Aorta (tissue), 5 donors: ENCODE measurements at regions of chr20 and their contacts with region 1.

Region 1: DNA sequence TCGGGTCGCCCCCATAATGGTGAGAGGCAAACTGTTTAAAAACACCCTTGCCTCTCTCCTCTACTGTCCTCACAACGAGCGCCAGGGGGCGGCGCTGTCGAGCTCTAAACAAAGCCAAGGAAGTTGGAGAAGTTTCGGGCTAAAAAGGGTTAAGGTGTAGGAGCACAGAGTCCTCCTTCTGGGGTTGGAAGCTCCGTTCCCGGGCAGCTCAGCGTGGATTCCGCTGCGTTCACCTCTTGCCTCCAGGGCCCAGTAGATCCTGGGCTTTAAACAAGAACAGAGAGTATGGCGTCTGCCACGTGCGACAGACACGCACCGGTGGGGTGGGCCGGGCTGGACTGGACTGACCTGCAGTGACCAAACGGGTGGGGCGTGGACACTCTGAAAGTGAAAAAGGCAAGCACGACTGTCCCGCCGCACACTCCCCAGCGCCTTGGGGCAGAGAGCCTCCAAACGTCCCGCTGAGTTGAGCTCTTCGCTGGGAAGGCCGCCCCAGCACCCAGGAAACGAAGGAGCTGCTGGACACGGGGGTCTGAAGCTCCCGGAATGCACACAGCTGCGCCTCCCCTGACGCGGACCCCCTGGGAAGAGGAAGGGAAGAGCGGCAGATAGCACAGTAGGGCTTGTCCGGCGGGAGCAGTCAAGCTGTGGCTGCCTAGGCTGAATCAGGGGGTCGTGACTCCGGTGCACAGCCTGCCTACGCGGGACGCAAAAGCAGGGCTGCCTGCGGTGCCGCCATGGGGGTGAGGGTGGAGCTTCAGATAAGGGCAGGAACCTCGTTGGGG is 1.6 kb upstream of the THBD start:
- DNase-seq: peak; percentile 92 to 96
- ATAC-seq: peak; percentile 65
- H3K4me3 ChIP-seq: peak overlapping the region; percentile 19 to 41
- H3K27ac ChIP-seq: peak overlapping the region in 1 of 2 donors; percentile 53
- H3K4me1 ChIP-seq: no peaks in the 10 kb centered on the region
- H3K27me3 ChIP-seq: no peaks in the 10 kb centered on the region

Region 2: GRCh38 chr20:22333885-22334545 is 717.0 kb before region 1 on chr20:
- intact Hi-C with region 1: loop called in 1 of 2 experiments (anchors 10 kb)
- DNase-seq: peak; percentile 62 to 80
- ATAC-seq: peak; percentile 80
- H3K4me3 ChIP-seq: no peak overlapping the region
- H3K27ac ChIP-seq: no peak overlapping the region
- H3K4me1 ChIP-seq: no peaks in the 10 kb centered on the region
- H3K27me3 ChIP-seq: no peaks in the 10 kb centered on the region

Region 3: DNA sequence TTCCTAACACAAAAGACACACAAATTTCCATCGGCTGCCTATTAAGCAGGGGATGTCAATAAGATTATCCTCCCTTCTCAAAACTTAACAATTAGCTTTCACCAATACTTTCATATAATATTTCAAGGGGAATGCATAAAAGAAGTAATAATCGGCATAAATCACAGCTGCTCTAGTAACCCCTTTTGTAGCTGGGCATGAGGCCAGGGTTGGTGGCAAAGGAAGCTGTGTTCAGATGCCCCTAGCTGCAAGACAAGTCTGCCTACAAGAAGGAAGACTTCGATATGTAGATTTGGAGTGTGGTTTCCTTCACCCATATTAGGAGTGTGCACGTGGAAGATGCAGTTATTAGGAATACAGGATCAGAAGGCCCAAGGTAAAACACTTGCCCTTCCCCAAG is 172.9 kb before region 1 on chr20:
- intact Hi-C with region 1: no loop called
- DNase-seq: no peak
- ATAC-seq: no peak
- H3K4me3 ChIP-seq: no peak overlapping the region
- H3K27ac ChIP-seq: no peak overlapping the region
- H3K4me1 ChIP-seq: no peaks in the 10 kb centered on the region
- H3K27me3 ChIP-seq: no peaks in the 10 kb centered on the region

Region 4: DNA sequence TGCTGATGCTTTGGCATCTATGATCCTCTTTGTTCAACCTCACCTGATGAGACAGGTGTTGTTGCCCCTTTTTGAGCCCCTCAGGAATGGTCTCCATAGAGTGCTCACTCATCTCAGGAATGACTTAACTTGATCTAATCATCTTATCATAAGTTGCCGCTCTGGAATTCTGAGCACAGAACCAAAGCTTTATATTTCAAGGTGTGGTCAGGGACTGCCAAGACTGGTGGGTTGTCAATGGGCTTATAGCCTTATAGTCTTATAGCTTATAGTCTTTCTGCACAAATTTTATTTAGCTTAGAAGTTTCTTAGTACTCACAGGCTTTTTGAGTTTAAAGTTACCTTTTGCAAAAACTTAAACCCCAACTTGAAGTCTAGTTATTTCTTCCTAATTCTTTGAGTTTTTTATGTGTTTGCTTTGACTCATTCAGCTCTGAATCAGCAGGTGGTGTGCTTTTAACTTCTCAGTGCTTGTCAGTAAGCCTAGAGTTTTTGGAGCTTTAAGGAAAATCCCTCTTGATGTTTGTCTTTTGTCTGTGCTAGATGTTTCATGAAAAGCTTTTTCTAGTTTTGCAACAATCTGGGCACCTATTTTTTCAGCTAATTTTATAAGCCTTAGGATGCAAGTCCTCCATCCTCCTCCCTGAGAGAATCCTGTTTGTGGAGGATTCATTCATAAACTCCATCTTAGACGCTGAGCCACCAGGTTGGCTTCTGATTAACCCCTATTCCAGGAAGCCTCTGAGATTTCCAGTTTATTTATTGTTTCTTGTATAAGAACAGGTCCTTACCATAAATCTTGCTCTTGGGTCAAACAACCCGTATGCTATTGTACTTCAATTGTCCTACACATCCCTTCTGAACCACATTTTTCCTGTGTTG is 88.2 kb before region 1 on chr20:
- intact Hi-C with region 1: no loop called
- DNase-seq: no peak
- ATAC-seq: no peak
- H3K4me3 ChIP-seq: no peak overlapping the region
- H3K27ac ChIP-seq: no peak overlapping the region
- H3K4me1 ChIP-seq: no peaks in the 10 kb centered on the region
- H3K27me3 ChIP-seq: no peaks in the 10 kb centered on the region

Region 5: DNA sequence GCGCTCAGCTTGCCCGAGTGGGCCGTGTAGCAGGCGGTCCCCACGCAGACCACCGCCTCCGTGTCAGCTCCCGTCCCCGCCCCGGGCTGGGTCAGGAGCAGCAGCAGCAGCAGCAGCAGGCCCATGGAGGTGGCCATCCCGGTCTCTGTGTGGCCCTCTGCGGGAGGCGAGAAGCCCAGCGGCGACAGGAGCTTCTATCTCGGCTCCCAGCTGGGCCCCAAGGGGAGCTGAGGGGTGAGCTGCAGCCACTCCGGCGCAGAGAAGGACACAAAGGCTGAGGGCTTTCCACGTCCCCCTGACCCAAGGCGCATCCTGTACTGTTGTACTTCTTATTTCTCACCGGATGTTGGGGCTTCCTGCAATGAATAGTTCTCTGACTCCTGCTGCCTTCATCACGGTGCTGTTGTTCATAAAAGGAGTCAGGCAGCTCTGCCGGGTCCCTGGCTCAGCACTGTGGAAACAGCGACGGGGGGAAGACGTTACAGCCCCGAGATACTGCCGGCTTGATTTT is 35.1 kb after region 1 on chr20 and contains the start of gene CD93:
- intact Hi-C with region 1: loop called in 1 of 2 experiments (anchors 5 kb)
- DNase-seq: peak; percentile 72 to 89
- ATAC-seq: peak; percentile 79
- H3K4me3 ChIP-seq: no peak within 1 kb of the TSS
- H3K27ac ChIP-seq: peak within 1 kb of the TSS; percentile 71 to 89
- H3K4me1 ChIP-seq: peaks cover 0 to 2% of the 10 kb centered on the region in 2 donors
- H3K27me3 ChIP-seq: no peaks in the 10 kb centered on the region
- total RNA-seq, gene CD93: 123 to 160 TPM

Region 6: DNA sequence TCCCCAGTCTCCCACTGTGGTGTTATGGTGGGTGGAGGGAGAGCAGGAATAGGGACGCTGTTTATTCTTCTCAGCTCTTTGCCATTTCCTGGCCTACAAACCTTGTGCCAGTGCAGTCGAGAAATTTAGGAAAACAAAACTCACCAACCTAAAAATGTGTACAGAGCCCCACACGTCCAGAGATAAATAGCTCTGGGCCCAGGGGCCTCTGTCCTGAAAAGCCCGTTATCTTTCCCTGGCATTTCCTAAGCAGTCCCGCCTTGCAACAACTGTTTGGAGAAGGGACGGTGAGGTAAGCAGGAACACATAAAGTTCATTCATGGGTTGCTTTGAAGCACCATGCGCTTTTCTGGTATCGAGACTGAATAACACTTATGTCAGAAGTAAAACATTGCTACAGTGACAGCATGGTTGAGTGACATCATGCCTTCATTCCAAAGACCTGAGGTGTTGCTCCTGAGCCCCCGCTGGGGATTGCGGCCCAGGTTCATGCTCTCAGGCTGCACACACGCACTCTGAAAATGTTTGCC is 219.4 kb after region 1 on chr20:
- intact Hi-C with region 1: loop called in 1 of 2 experiments (anchors 1 kb)
- DNase-seq: no peak
- ATAC-seq: no peak
- H3K4me3 ChIP-seq: no peak overlapping the region
- H3K27ac ChIP-seq: peak overlapping the region; percentile 90 to 95
- H3K4me1 ChIP-seq: peaks cover 0 to 4% of the 10 kb centered on the region in 2 donors
- H3K27me3 ChIP-seq: no peaks in the 10 kb centered on the region

Region 7: GRCh38 chr20:23350196-23350903 is 299.3 kb after region 1 on chr20 and contains the start of gene NXT1:
- intact Hi-C with region 1: loop called in 1 of 2 experiments (anchors 5 kb)
- DNase-seq: peak; percentile 98
- ATAC-seq: peak; percentile 96
- H3K4me3 ChIP-seq: peak within 1 kb of the TSS; percentile 66 to 73
- H3K27ac ChIP-seq: peak within 1 kb of the TSS; percentile 87 to 91
- H3K4me1 ChIP-seq: no peaks in the 10 kb centered on the region
- H3K27me3 ChIP-seq: no peaks in the 10 kb centered on the region
- total RNA-seq, gene NXT1: 14.5 to 18.7 TPM